Motor neuron (in vitro differentiated cells): ENCODE measurements at regions of chr2 and their contacts with region 1.

Region 1: DNA sequence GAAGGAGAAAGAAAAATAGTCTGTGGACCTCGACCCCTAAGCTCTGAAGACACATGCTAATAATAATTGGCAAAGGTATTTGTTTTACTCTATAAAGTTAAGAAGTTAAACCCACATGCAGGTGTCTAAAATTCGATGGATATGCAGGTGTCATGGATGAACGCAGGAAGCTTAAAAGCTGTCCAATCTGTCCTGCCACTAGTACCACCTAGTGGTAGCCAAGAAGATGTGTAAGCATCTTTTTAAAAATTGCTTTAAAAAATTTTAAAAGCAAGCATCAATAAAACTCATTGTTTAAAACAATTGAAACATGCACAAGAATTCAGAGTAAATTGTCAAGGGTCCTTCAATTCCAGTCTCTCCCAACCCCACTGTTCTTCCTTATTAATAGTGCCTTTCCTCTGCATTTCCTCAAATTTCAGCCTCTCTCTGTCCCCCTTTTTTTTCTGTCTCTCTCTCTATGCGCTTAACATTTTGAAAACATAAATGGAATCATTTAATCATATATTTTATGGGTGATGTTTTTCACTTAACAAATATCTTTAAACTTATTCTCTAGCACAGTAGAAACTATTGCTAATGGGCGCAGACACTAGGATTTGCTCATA is 30.6 kb upstream of the PPP3R1 start:
- ATAC-seq: peak in 1 of 8 experiments; percentile 27
- H3K4me3 ChIP-seq: no peak overlapping the region
- H3K27ac ChIP-seq: no peak overlapping the region
- H3K4me1 ChIP-seq: peaks cover 0 to 2% of the 10 kb centered on the region in 2 donors

Region 2: GRCh38 chr2:67930156-67930555 is 352.8 kb before region 1 on chr2:
- in situ Hi-C with region 1: no loop called
- ATAC-seq: peak in 1 of 8 experiments; percentile 35
- H3K4me3 ChIP-seq: no peak overlapping the region
- H3K27ac ChIP-seq: no peak overlapping the region
- H3K4me1 ChIP-seq: peaks cover 20 to 33% of the 10 kb centered on the region in 2 donors

Region 3: DNA sequence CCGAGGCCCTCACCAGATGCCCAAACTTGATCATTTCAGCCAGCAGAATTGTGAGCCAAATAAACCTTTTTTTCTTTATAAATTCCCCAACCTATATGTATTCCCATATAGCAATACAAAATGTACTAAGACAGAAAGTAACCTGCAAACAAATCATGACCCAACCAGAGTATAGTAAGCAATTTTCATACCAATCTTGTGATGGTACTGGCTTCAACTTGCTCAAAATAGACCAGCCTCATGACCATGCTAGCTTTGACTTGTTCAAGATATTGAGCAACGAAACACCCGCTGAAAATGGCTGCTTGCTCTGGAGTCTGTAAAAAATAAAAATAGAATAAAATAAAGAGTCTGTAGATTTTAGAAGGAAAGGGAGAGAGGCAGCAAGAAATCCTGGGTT is 317.7 kb before region 1 on chr2:
- in situ Hi-C with region 1: no loop called
- ATAC-seq: no peak
- H3K4me3 ChIP-seq: no peak overlapping the region
- H3K27ac ChIP-seq: no peak overlapping the region
- H3K4me1 ChIP-seq: no peaks in the 10 kb centered on the region

Region 4: GRCh38 chr2:68121873-68122679 is 160.8 kb before region 1 on chr2:
- in situ Hi-C with region 1: loop called in 2 of 9 experiments (anchors 25 kb)
- ATAC-seq: peak; percentile 63 to 84 (median 72)
- H3K4me3 ChIP-seq: no peak overlapping the region
- H3K27ac ChIP-seq: no peak overlapping the region
- H3K4me1 ChIP-seq: no peaks in the 10 kb centered on the region

Region 5: GRCh38 chr2:68456198-68456597 is 173.3 kb after region 1 on chr2:
- in situ Hi-C with region 1: no loop called
- ATAC-seq: no peak
- H3K4me3 ChIP-seq: no peak overlapping the region
- H3K27ac ChIP-seq: no peak overlapping the region
- H3K4me1 ChIP-seq: no peaks in the 10 kb centered on the region